ENCODE measurements at regions of chr1 and their contacts with region 1.

Region 1: DNA sequence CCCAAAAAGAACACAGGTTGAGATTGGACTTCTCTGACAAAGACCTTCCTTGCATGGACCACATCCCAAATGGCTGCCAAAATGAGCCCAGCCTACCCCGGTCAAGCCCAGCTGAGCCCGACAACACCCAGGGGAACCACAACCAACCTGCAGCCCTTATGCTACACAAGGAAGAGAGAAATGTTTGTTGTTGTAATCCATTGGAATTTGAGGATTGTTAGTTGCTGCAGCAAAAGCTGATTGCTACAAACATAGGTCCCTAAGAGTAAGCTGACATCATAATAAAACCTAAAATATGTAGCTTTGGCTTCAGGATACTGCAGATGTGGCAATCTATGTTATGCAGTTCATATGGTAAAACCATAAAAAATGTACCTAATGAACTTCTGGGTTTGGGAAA is 65.5 kb upstream of the DNAH14 start:
- DNase-seq: no peak
- H3K4me3 ChIP-seq: no peak overlapping the region
- H3K4me3 Mint-ChIP-seq: no peak overlapping the region
- H3K27ac ChIP-seq: no peak overlapping the region
- H3K27ac Mint-ChIP-seq: no peak overlapping the region
- H3K4me1 ChIP-seq: no peaks in the 10 kb centered on the region
- H3K4me1 Mint-ChIP-seq: no peaks in the 10 kb centered on the region
- H3K27me3 ChIP-seq: no peaks in the 10 kb centered on the region
- H3K27me3 Mint-ChIP-seq: peaks cover 9 to 14% of the 10 kb centered on the region in 2 donors

Region 2: GRCh38 chr1:224592636-224593582 is 271.1 kb before region 1 on chr1:
- CTCF ChIA-PET with region 1: no interaction called
- POLR2A ChIA-PET with region 1: no interaction called
- intact Hi-C with region 1: no loop called
- DNase-seq: no peak
- H3K4me3 ChIP-seq: no peak overlapping the region
- H3K4me3 Mint-ChIP-seq: no peak overlapping the region
- H3K27ac ChIP-seq: no peak overlapping the region
- H3K27ac Mint-ChIP-seq: no peak overlapping the region
- H3K4me1 ChIP-seq: no peaks in the 10 kb centered on the region
- H3K4me1 Mint-ChIP-seq: peaks cover 0 to 4% (median under 1%) of the 10 kb centered on the region in 4 donors
- H3K27me3 ChIP-seq: no peaks in the 10 kb centered on the region
- H3K27me3 Mint-ChIP-seq: peaks cover 0 to under 1% of the 10 kb centered on the region in 2 donors

Region 3: GRCh38 chr1:224851210-224851847 is 12.6 kb before region 1 on chr1:
- CTCF ChIA-PET with region 1: interaction called, 17 read pairs
- POLR2A ChIA-PET with region 1: no interaction called
- intact Hi-C with region 1: no loop called
- DNase-seq: peak in 4 of 5 donors; percentile 12 to 34 (median 28)
- H3K4me3 ChIP-seq: no peak overlapping the region
- H3K4me3 Mint-ChIP-seq: no peak overlapping the region
- H3K27ac ChIP-seq: no peak overlapping the region
- H3K27ac Mint-ChIP-seq: no peak overlapping the region
- H3K4me1 ChIP-seq: no peaks in the 10 kb centered on the region
- H3K4me1 Mint-ChIP-seq: peaks cover 0 to 1% (median 0%) of the 10 kb centered on the region in 4 donors
- H3K27me3 ChIP-seq: no peaks in the 10 kb centered on the region
- H3K27me3 Mint-ChIP-seq: peaks cover 0 to 3% of the 10 kb centered on the region in 2 donors

Measured in CD4-positive, alpha-beta memory T cell (primary cell).